ENCODE measurements at regions of chr1 and their contacts with region 1.

Region 1: GRCh38 chr1:147640553-147641165 is 29.7 kb downstream of the ACP6 start:
- DNase-seq: peak; percentile 71 to 80 (median 79)
- ATAC-seq: peak; percentile 95 to 98 (median 96)
- H3K4me3 ChIP-seq: no peak overlapping the region
- H3K27ac ChIP-seq: no peak overlapping the region
- H3K4me1 ChIP-seq: peaks cover 0 to 12% (median 0%) of the 10 kb centered on the region in 4 donors
- H3K27me3 ChIP-seq: no peaks in the 10 kb centered on the region
- CTCF ChIP-seq: peak; percentile 67 to 95 (median 94)
- POLR2A ChIP-seq: no peak

Region 2: DNA sequence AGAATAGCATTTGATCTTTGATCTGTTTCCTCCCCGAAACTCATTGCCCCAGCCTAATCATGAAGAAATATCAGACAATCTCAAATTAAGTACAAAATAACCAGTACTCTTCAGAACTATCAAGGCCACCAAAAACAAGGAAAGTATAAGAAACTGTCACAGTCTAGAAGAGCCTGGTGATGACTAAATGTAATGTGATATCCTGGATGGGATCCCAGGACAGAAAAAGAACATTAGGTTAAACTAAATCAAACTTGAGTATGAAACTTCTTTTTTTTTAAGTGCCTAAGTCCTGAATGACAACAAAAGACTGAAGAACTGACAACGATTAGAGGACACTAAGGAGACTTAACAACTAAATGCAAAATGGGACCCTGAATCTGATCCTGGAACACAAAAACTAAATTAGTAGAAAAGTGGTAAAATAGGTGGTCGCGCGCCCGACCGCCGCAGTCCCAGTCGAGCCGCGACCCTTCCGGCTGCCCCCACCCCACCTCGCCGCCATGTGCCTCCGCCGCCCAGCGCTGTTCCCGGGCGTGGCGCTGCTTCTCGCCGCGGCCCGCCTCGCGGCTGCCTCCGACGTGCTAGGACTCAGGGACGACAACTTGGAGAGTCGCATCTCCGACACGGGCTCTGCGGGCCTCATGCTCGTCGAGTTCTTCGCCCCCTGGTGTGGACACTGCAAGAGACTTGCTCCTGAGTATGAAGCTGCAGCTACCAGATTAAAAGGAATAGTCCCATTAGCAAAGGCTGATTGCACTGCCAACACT is 462.9 kb before region 1 on chr1:
- intact Hi-C with region 1: no loop called
- DNase-seq: peak in 1 of 3 donors; percentile 16
- ATAC-seq: peak in 3 of 4 donors; percentile 23 to 36 (median 26)
- H3K4me3 ChIP-seq: no peak overlapping the region
- H3K27ac ChIP-seq: no peak overlapping the region
- H3K4me1 ChIP-seq: no peaks in the 10 kb centered on the region
- H3K27me3 ChIP-seq: no peaks in the 10 kb centered on the region
- CTCF ChIP-seq: no peak
- POLR2A ChIP-seq: no peak

Region 3: GRCh38 chr1:147567594-147568381 is 72.9 kb before region 1 on chr1:
- intact Hi-C with region 1: no loop called
- DNase-seq: no peak
- ATAC-seq: no peak
- H3K4me3 ChIP-seq: no peak overlapping the region
- H3K27ac ChIP-seq: no peak overlapping the region
- H3K4me1 ChIP-seq: no peaks in the 10 kb centered on the region
- H3K27me3 ChIP-seq: no peaks in the 10 kb centered on the region
- CTCF ChIP-seq: no peak
- POLR2A ChIP-seq: no peak

Region 4: DNA sequence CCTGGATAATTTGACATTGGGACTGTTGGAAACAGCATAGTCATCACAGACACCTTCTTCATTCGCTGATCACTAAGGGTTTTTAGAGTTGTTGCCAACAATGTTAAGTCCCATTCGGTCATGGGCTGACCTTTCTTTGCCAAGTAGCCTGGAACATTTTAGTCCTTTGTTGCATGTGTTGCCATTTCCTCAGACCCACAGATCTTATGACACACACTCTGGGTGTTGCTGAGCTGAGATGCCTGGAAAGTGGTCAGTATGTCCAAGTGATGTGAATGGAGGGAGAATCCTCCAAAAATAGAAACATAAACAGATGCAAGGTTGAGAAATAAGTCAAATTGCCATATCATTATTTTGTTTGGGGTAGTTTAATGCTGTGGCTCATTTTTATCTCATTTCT is 181.2 kb after region 1 on chr1:
- intact Hi-C with region 1: no loop called
- DNase-seq: no peak
- ATAC-seq: no peak
- H3K4me3 ChIP-seq: no peak overlapping the region
- H3K27ac ChIP-seq: no peak overlapping the region
- H3K4me1 ChIP-seq: no peaks in the 10 kb centered on the region
- H3K27me3 ChIP-seq: no peaks in the 10 kb centered on the region
- CTCF ChIP-seq: no peak
- POLR2A ChIP-seq: no peak

Region 5: GRCh38 chr1:147882535-147882934 is 241.9 kb after region 1 on chr1:
- intact Hi-C with region 1: loop called in 1 of 2 experiments (anchors 10 kb)
- DNase-seq: no peak
- ATAC-seq: no peak
- H3K4me3 ChIP-seq: no peak overlapping the region
- H3K27ac ChIP-seq: no peak overlapping the region
- H3K4me1 ChIP-seq: no peaks in the 10 kb centered on the region
- H3K27me3 ChIP-seq: no peaks in the 10 kb centered on the region
- CTCF ChIP-seq: no peak
- POLR2A ChIP-seq: no peak